ENCODE measurements at regions of chr2 and their contacts with region 1.

Region 1: GRCh38 chr2:110818767-110819481 is 86.6 kb downstream of the ACOXL start:
- H3K4me3 Mint-ChIP-seq: no peak overlapping the region
- H3K27ac Mint-ChIP-seq: peak overlapping the region; percentile 4
- H3K4me1 Mint-ChIP-seq: peaks cover 16% of the 10 kb centered on the region
- H3K27me3 Mint-ChIP-seq: peaks cover 27% of the 10 kb centered on the region

Region 2: DNA sequence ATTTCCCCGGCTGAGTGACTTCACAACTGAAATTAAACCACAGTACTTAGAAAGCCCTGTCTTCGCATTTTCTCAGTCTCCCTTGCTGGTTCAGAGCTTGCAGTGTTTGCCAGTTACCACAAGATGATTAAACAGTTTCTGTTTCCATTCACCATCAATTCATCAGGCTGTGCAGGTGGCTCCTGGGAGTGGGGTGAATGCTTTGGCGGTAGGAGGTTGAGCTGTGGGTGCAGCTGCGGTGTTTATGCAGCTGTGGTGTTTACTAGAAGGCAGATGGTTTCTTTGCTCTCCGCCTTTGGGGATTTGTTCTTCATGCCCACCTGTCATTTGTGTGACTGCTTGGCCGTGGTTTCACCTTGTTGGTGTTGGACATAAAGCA is 70.4 kb before region 1 on chr2:
- intact Hi-C with region 1: no loop called
- H3K4me3 Mint-ChIP-seq: no peak overlapping the region
- H3K27ac Mint-ChIP-seq: no peak overlapping the region
- H3K4me1 Mint-ChIP-seq: no peaks in the 10 kb centered on the region
- H3K27me3 Mint-ChIP-seq: peaks cover 26% of the 10 kb centered on the region

Region 3: DNA sequence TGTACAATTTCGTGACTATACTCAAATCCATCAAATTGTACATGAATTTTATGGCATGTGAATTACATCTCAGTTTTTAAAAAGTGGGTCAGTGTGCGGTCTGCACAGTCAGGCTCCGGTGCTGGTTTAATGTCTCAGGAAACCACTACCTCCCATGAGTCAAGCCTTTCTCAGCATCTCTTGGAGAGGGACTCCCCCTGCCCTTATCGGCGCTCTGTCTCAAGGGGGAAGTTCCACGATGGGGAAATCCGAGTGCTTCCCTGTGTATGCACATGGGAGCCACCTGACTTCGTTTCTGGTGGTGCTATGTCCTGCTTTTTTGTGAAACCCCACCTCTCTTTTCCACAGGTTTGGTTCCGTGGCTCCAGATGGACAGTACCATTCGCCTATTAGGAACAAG is 14.0 kb before region 1 on chr2:
- intact Hi-C with region 1: no loop called
- H3K4me3 Mint-ChIP-seq: no peak overlapping the region
- H3K27ac Mint-ChIP-seq: no peak overlapping the region
- H3K4me1 Mint-ChIP-seq: peaks cover 16% of the 10 kb centered on the region
- H3K27me3 Mint-ChIP-seq: peaks cover 47% of the 10 kb centered on the region

Region 4: DNA sequence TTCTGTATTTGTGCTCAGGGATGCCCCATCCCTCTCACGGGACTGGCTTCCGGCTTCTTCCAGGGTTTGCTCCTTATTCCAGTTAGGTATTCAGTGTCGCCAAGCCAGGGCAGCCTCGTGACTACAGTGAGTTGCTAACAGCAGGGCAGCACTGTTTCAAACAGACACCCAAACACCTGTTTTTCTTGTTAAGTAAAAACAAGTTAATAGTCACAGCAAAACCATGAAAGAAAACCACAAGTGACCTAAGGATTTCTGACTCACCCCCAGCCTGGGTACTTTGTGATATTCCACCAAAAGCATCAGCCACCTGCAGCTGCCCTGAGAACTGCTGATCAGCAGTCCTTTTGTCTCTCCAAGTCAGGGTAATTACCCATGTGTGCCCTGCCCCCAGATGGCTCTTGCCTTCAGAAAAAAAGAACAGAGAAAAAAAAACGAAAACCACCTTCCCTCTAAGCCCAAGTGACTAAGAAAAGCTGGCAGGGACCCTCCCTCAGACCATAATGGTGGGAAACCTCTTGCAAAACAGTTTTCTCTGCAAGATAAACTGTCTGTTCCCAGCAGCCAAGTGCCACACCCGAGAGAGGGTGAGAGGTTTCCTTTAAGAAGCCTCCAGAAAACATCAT is 886.9 kb after region 1 on chr2:
- intact Hi-C with region 1: loop called (anchors 10 kb)
- H3K4me3 Mint-ChIP-seq: no peak overlapping the region
- H3K27ac Mint-ChIP-seq: peak overlapping the region; percentile 31
- H3K4me1 Mint-ChIP-seq: peaks cover 50% of the 10 kb centered on the region
- H3K27me3 Mint-ChIP-seq: peaks cover 5% of the 10 kb centered on the region